ENCODE measurements at regions of chr13 and their contacts with region 1.

Region 1: DNA sequence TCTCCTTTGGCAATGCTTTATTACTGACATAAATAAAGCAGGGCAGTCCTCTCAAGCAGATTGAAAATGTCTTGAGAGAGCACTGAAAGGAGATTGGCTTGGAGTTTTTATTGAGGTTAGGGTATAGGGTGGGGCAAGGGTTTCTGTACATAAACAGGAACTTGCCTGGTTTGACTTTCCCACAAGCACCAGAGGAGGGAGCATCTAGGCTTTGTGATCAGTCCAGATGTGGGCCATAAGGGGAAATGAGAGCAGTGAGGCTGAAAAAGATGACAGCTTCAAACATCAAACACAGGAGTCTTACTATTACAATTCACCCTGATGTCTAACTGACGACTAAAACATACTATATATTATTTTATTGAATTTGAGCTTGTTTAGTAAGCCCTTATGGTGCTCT is 260.9 kb downstream of the MTUS2 start:
- DNase-seq: no peak
- ATAC-seq: peak; percentile 94
- H3K4me3 Mint-ChIP-seq: no peak overlapping the region
- H3K27ac Mint-ChIP-seq: no peak overlapping the region
- H3K4me1 Mint-ChIP-seq: peaks cover 21% of the 10 kb centered on the region
- H3K27me3 Mint-ChIP-seq: peaks cover 2% of the 10 kb centered on the region
- CTCF ChIP-seq: no peak

Region 2: DNA sequence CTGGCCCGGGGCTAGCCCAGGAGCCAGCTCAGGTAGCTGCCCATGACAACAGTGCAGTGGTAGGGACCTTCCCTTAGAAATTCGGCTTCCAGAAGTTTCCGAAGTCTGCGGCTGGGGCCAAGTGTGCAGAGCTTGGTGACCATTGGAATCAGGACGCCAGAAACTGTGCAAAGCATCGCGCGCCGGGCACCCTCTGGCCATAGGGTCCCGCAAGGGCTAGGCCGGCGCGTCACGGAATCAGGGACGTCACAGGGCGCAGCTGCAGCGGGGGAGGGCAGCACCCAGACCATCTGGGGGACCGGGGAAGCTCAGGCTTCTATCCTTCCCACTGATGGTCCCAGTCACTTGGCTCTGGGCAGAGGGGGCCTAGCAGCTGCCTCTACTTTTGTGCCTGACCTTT is 41.8 kb before region 1 on chr13:
- CTCF ChIA-PET with region 1: no interaction called
- POLR2A ChIA-PET with region 1: no interaction called
- intact Hi-C with region 1: no loop called
- DNase-seq: no peak
- ATAC-seq: no peak
- H3K4me3 Mint-ChIP-seq: no peak overlapping the region
- H3K27ac Mint-ChIP-seq: no peak overlapping the region
- H3K4me1 Mint-ChIP-seq: no peaks in the 10 kb centered on the region
- H3K27me3 Mint-ChIP-seq: no peaks in the 10 kb centered on the region
- CTCF ChIP-seq: no peak

Region 3: DNA sequence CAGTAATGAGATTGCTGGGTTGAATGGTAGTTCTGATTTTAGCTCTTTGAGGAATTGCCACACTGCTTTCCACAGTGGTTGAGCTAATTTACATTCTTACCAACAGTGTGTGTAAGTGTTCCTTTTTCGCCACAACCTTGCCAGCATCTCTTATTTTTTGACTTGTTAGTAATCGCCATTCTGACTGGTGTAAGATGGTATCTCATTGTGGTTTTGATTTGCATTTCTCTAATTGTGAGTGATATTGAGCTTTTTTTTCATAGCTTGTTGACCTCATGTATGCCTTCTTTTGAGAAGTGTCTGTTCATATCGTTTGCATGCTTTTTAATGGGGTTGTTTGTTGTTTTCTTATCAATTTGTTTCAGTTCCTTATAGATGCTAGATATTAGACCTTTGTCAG is 15.9 kb before region 1 on chr13:
- CTCF ChIA-PET with region 1: no interaction called
- POLR2A ChIA-PET with region 1: no interaction called
- intact Hi-C with region 1: no loop called
- DNase-seq: no peak
- ATAC-seq: no peak
- H3K4me3 Mint-ChIP-seq: no peak overlapping the region
- H3K27ac Mint-ChIP-seq: no peak overlapping the region
- H3K4me1 Mint-ChIP-seq: no peaks in the 10 kb centered on the region
- H3K27me3 Mint-ChIP-seq: peaks cover 2% of the 10 kb centered on the region
- CTCF ChIP-seq: no peak

Region 4: DNA sequence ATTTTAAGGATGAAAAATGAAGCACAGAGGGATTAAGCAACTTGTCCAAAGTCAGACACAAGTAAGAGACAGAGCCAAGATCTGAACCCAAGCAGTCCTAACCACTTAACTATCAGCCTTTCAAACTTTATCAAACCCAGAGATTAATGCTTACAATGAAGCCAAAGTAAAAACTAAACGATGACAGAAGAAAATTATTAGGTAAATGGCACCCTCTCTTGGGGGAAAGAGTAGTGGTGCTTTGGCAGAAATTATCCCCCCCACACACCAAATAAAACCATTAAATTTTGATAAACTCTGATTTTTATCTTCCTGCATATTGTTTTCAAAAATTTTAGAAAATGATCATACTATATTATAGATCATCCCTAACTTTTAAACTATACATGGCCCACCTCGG is 185.2 kb after region 1 on chr13:
- CTCF ChIA-PET with region 1: no interaction called
- POLR2A ChIA-PET with region 1: no interaction called
- intact Hi-C with region 1: loop called (anchors 5 kb)
- DNase-seq: no peak
- ATAC-seq: no peak
- H3K4me3 Mint-ChIP-seq: no peak overlapping the region
- H3K27ac Mint-ChIP-seq: no peak overlapping the region
- H3K4me1 Mint-ChIP-seq: no peaks in the 10 kb centered on the region
- H3K27me3 Mint-ChIP-seq: peaks cover 5% of the 10 kb centered on the region
- CTCF ChIP-seq: no peak

Region 5: DNA sequence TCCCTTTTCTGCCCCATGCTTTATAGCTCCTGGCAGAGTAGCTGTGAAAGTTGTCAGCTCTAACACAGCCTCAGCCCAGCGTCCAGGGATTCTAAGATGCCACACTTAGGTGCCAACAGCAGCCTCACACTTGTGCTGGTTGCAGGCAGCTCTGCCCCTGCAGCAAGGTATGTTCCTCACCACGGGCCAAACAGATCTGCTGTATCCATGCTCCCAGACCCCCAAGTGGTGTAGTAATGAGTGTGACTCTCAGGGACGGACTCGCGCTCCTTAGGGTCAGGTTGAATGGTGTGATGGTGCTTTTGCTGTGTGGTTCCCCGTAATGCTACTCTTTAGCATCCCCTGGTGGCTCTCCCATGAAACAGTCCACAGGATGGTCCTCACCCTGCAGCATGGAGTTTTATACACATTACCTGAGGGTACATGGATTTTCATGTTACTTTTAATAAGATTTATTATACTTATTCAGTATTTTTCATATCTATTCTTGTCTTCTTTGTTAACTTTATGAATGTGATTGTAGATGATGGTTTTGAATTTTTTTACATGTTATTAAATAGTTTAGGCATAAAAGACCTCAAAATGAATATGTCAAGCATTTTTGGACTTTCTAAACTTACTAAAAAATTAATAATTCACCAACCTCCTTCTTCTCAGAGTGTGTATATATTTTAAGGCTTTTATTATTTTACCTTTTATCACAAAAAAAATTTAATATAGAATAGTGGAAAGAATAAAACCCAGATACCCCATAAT is 282.0 kb after region 1 on chr13:
- CTCF ChIA-PET with region 1: interaction called, 8 read pairs
- POLR2A ChIA-PET with region 1: no interaction called
- intact Hi-C with region 1: loop called (anchors 1 kb)
- DNase-seq: no peak
- ATAC-seq: peak; percentile 78
- H3K4me3 Mint-ChIP-seq: no peak overlapping the region
- H3K27ac Mint-ChIP-seq: no peak overlapping the region
- H3K4me1 Mint-ChIP-seq: no peaks in the 10 kb centered on the region
- H3K27me3 Mint-ChIP-seq: peaks cover 6% of the 10 kb centered on the region
- CTCF ChIP-seq: no peak

Measured in activated B cell treated with CpG ODN at 0.5 μM for 24 hours (primary cell).